ENCODE measurements at regions of chr19 and their contacts with region 1.

Region 1: GRCh38 chr19:8626842-8627241 is 3.6 kb upstream of the NFILZ start:
- DNase-seq: no peak
- H3K4me3 Mint-ChIP-seq: no peak overlapping the region
- H3K27ac Mint-ChIP-seq: no peak overlapping the region
- H3K4me1 Mint-ChIP-seq: no peaks in the 10 kb centered on the region
- H3K27me3 Mint-ChIP-seq: no peaks in the 10 kb centered on the region

Region 2: GRCh38 chr19:7888145-7888825 is 738.6 kb before region 1 on chr19 and contains the start of gene LRRC8E:
- intact Hi-C with region 1: loop called (anchors 10 kb)
- DNase-seq: no peak
- H3K4me3 Mint-ChIP-seq: no peak within 1 kb of the TSS
- H3K27ac Mint-ChIP-seq: no peak within 1 kb of the TSS
- H3K4me1 Mint-ChIP-seq: peaks cover 1% of the 10 kb centered on the region
- H3K27me3 Mint-ChIP-seq: peaks cover 10% of the 10 kb centered on the region
- total RNA-seq, gene LRRC8E: not detected in 2 replicates